Activated CD4-positive, alpha-beta memory T cell treated with anti-CD3 and anti-CD28 coated beads for 36 hours (primary cell): ENCODE measurements at regions of chr7 and their contacts with region 1.

Region 1: GRCh38 chr7:92953657-92954056 is 117.3 kb upstream of the CDK6 start:
- DNase-seq: peak; percentile 31
- H3K4me3 Mint-ChIP-seq: no peak overlapping the region
- H3K27ac Mint-ChIP-seq: peak overlapping the region; percentile 60
- H3K4me1 Mint-ChIP-seq: peaks cover 35% of the 10 kb centered on the region
- H3K27me3 Mint-ChIP-seq: peaks cover 4% of the 10 kb centered on the region

Region 2: GRCh38 chr7:92854501-92855238 is 99.0 kb before region 1 on chr7:
- CTCF ChIA-PET with region 1: no interaction called
- POLR2A ChIA-PET with region 1: no interaction called
- intact Hi-C with region 1: loop called (anchors 5 kb)
- DNase-seq: peak; percentile 46
- H3K4me3 Mint-ChIP-seq: no peak overlapping the region
- H3K27ac Mint-ChIP-seq: peak overlapping the region; percentile 0
- H3K4me1 Mint-ChIP-seq: peaks cover 16% of the 10 kb centered on the region
- H3K27me3 Mint-ChIP-seq: peaks cover 5% of the 10 kb centered on the region

Region 3: GRCh38 chr7:92968502-92968901 is 14.8 kb after region 1 on chr7:
- CTCF ChIA-PET with region 1: no interaction called
- POLR2A ChIA-PET with region 1: interaction called, 3 read pairs
- intact Hi-C with region 1: loop called (anchors 2 kb)
- DNase-seq: no peak
- H3K4me3 Mint-ChIP-seq: no peak overlapping the region
- H3K27ac Mint-ChIP-seq: no peak overlapping the region
- H3K4me1 Mint-ChIP-seq: peaks cover 17% of the 10 kb centered on the region
- H3K27me3 Mint-ChIP-seq: no peaks in the 10 kb centered on the region

Region 4: DNA sequence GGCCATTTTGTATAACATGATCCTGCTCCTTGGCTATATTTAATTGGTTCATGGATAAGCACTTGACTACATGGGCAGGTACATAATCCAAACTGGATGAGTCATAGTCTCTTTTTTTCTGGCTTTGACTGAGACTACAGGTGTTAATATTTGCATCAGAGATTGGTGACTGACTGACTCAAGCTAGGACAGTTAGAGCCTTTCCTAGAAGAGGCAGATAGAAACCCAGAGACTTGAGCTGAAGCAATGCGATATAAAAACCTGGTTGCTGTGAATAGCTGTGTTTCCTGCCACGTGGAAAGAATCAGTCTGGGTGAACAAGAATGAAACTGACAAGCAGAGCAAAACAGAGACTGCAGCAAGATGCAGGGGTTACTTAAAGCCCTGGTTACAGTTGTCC is 83.2 kb after region 1 on chr7:
- CTCF ChIA-PET with region 1: interaction called, 5 read pairs
- POLR2A ChIA-PET with region 1: no interaction called
- intact Hi-C with region 1: loop called (anchors 2 kb)
- DNase-seq: peak; percentile 64
- H3K4me3 Mint-ChIP-seq: no peak overlapping the region
- H3K27ac Mint-ChIP-seq: peak overlapping the region; percentile 53
- H3K4me1 Mint-ChIP-seq: peaks cover 22% of the 10 kb centered on the region
- H3K27me3 Mint-ChIP-seq: no peaks in the 10 kb centered on the region